Activated CD4-positive, alpha-beta T cell treated with anti-CD3 and anti-CD28 coated beads, Interleukin-2, amount 10 ng/mL, durations not matched to agents 7 days and 5 days (primary cell): ENCODE measurements at regions of chr10 and their contacts with region 1.

Region 1: GRCh38 chr10:67779465-67780203 is 58.4 kb downstream of the DNAJC12 start:
- DNase-seq: peak; percentile 88
- H3K4me3 Mint-ChIP-seq: no peak overlapping the region
- H3K27ac Mint-ChIP-seq: peak overlapping the region; percentile 0
- H3K4me1 Mint-ChIP-seq: peaks cover 42% of the 10 kb centered on the region
- H3K27me3 Mint-ChIP-seq: no peaks in the 10 kb centered on the region

Region 2: GRCh38 chr10:67666416-67667034 is 113.1 kb before region 1 on chr10:
- CTCF ChIA-PET with region 1: interaction called, 10 read pairs
- POLR2A ChIA-PET with region 1: no interaction called
- DNase-seq: no peak
- H3K4me3 Mint-ChIP-seq: no peak overlapping the region
- H3K27ac Mint-ChIP-seq: no peak overlapping the region
- H3K4me1 Mint-ChIP-seq: no peaks in the 10 kb centered on the region
- H3K27me3 Mint-ChIP-seq: peaks cover 7% of the 10 kb centered on the region

Region 3: GRCh38 chr10:67697724-67698131 is 81.9 kb before region 1 on chr10:
- CTCF ChIA-PET with region 1: interaction called, 34 read pairs
- POLR2A ChIA-PET with region 1: no interaction called
- DNase-seq: peak; percentile 44
- H3K4me3 Mint-ChIP-seq: no peak overlapping the region
- H3K27ac Mint-ChIP-seq: no peak overlapping the region
- H3K4me1 Mint-ChIP-seq: peaks cover 15% of the 10 kb centered on the region
- H3K27me3 Mint-ChIP-seq: peaks cover 39% of the 10 kb centered on the region